Right lobe of liver (tissue), 6 donors: ENCODE measurements at regions of chr15 and their contacts with region 1.

Region 1: DNA sequence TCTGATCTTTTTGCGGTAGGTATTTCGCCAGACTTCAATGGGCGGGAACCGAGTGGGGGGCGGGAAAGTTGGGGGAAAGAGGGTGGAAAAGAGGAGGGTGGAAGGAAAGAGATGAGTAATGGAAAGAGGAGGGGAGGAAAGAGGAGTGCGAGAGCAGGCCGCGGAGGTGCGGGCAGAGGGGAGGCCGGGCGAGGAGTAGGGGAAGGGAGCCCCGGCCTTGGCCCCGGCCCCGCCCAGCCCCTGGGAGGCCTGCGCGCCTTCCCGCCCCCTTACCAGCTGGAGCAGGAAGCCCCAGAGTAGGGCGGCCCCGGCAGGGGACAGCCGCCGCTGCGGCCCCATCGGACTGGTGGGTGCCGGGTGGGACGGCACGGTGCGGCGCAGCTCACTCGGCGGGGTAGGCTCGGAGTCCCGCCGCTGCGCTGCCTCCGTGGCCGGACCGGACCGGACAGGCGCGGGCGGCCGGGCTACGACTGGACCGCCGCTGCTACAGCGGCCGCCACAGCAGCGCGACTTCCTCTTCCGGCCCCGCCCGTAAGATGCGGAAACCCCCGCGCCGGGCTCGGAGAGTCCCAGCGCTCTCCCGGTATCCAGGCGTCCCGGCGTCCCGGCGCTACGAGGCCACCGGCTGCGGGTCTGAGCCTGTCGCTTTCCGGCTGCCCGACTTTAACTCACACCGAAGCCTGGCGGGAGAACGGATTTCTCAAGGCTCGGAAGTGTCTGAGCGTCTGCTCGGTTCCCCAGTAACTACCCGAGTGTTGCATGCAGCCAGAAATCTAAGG is at the start of gene SPPL2A:
- DNase-seq: peak; percentile 88 to 91 (median 91)
- ATAC-seq: peak; percentile 88 to 96 (median 93)
- H3K4me3 ChIP-seq: peak within 1 kb of the TSS; percentile 91 to 93 (median 93)
- H3K27ac ChIP-seq: peak within 1 kb of the TSS; percentile 95 to 99 (median 97)
- H3K4me1 ChIP-seq: peaks cover 0 to 14% (median 0%) of the 10 kb centered on the region in 4 donors
- H3K27me3 ChIP-seq: no peaks in the 10 kb centered on the region
- CTCF ChIP-seq: no peak
- POLR2A ChIP-seq: peak; percentile 97
- total RNA-seq, gene SPPL2A: 94.0 to 239 (median 120) TPM

Region 2: GRCh38 chr15:50487287-50487686 is 278.1 kb before region 1 on chr15:
- intact Hi-C with region 1: no loop called
- DNase-seq: no peak
- ATAC-seq: no peak
- H3K4me3 ChIP-seq: no peak overlapping the region
- H3K27ac ChIP-seq: no peak overlapping the region
- H3K4me1 ChIP-seq: no peaks in the 10 kb centered on the region
- H3K27me3 ChIP-seq: no peaks in the 10 kb centered on the region
- CTCF ChIP-seq: no peak
- POLR2A ChIP-seq: no peak

Region 3: GRCh38 chr15:50686468-50687301 is 78.7 kb before region 1 on chr15 and contains the start of gene TRPM7:
- intact Hi-C with region 1: loop called in 1 of 2 experiments (anchors 10 kb)
- DNase-seq: peak; percentile 92 to 93 (median 92)
- ATAC-seq: peak; percentile 78 to 87 (median 86)
- H3K4me3 ChIP-seq: peak within 1 kb of the TSS; percentile 91 to 97 (median 93)
- H3K27ac ChIP-seq: peak within 1 kb of the TSS; percentile 94 to 99 (median 96)
- H3K4me1 ChIP-seq: peaks cover 0 to 44% (median 10%) of the 10 kb centered on the region in 4 donors
- H3K27me3 ChIP-seq: no peaks in the 10 kb centered on the region
- CTCF ChIP-seq: no peak
- POLR2A ChIP-seq: peak; percentile 88
- total RNA-seq, gene TRPM7: 20.9 to 31.9 (median 24.7) TPM

Region 4: DNA sequence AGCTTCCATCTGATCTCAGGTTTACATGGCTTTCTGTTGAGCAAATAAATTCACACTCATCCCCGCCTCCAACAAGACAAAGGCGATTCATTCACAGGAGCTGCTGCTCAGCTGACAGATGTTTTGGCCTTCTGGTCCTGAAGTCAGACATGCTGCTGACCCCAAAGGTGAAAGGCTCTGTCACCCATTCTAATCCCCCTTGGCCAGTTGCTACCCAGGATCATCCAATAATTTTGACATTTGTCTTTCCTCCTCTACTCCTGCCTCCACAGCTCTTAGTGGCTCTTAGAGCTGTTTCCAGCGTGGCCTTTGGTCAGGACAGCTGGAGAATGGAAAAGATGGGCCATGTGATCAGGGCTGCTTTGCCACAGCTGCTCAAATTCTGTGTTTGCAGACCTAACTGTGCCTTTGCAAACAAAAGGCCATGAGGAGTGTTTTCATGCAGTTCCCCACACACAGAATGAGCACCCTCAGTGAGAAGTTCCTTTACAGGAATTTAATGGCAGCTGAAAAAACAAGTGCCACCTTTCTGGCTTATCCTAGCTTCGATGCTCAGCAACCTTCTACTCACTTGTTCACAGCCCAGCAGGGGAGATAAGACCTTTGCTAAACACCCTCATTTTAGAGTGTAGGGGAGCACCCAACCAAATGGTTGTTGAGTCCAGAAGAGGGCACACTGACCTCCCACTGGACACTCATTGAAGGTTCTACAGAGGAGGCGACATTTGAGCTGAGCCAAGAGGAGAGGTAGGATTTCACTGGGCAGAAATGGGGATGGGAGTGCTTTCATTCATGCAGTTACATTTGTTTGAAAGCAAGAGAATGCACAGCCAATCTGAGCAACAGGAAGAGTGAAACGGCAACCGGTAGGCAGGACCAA is 534.0 kb after region 1 on chr15:
- intact Hi-C with region 1: no loop called
- DNase-seq: no peak
- ATAC-seq: no peak
- H3K4me3 ChIP-seq: no peak overlapping the region
- H3K27ac ChIP-seq: no peak overlapping the region
- H3K4me1 ChIP-seq: no peaks in the 10 kb centered on the region
- H3K27me3 ChIP-seq: no peaks in the 10 kb centered on the region
- CTCF ChIP-seq: no peak
- POLR2A ChIP-seq: no peak